ENCODE measurements at regions of chr9 and their contacts with region 1.

Region 1: GRCh38 chr9:19102631-19103345 is at the start of gene HAUS6:
- DNase-seq: peak; percentile 97 to 98 (median 98)
- ATAC-seq: peak; percentile 100
- H3K4me3 ChIP-seq: peak within 1 kb of the TSS; percentile 56 to 92 (median 77)
- H3K27ac ChIP-seq: peak within 1 kb of the TSS; percentile 61 to 92 (median 88)
- H3K4me1 ChIP-seq: peaks cover 0 to 24% (median 11%) of the 10 kb centered on the region in 12 donors
- H3K27me3 ChIP-seq: no peaks in the 10 kb centered on the region
- CTCF ChIP-seq: peak; percentile 34 to 65 (median 47)
- POLR2A ChIP-seq: peak in 1 of 2 donors; percentile 64
- total RNA-seq, gene HAUS6: 4.6 to 8.8 (median 7.3) TPM

Region 2: DNA sequence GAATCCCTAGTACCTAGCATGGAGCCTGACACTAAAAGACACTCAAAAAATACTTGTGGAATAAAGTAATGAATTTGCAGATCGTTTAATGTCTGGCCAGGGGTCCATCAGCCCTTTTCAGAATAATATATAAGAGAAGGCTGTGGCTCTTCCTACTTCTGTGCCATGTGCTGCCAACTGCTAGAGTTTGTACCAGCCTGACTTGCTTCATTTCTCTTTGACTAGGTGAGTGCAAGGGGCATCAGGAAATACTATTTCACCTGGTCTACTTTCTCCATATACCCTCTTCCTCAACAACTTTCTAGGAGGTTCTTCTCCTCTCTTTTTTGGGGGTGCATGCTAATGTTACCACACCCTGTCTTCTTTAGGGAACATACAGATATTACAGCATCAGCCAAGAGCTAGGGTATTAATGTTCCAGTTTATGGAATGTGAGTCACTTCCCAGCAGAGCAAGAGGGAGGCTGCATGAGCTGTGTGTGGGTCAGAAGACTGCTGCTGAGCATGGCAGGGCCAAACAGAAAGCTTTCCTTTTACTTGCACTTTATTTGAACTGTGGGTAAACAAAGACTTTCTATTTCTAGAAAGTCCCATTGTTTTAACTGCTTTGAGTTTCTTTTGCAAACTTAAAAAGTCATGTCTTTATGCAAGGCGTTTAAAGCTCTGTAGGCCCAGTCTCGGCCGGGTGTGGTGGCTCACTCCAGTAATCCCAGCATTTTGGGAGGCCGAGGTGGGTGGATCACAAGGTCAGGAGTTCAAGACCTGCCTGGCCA is 470.0 kb before region 1 on chr9:
- intact Hi-C with region 1: no loop called
- DNase-seq: peak in 4 of 5 donors; percentile 23 to 46 (median 36)
- ATAC-seq: peak; percentile 58 to 97 (median 88)
- H3K4me3 ChIP-seq: no peak overlapping the region
- H3K27ac ChIP-seq: peak overlapping the region; percentile 34 to 76 (median 62)
- H3K4me1 ChIP-seq: peaks cover 0 to 24% (median 9%) of the 10 kb centered on the region in 12 donors
- H3K27me3 ChIP-seq: no peaks in the 10 kb centered on the region
- CTCF ChIP-seq: no peak
- POLR2A ChIP-seq: no peak

Region 3: GRCh38 chr9:19057033-19057432 is 45.8 kb before region 1 on chr9:
- intact Hi-C with region 1: loop called in 1 of 10 experiments (anchors 5 kb)
- DNase-seq: no peak
- ATAC-seq: no peak
- H3K4me3 ChIP-seq: no peak overlapping the region
- H3K27ac ChIP-seq: no peak overlapping the region
- H3K4me1 ChIP-seq: peaks cover 0 to 18% (median 7%) of the 10 kb centered on the region in 12 donors
- H3K27me3 ChIP-seq: no peaks in the 10 kb centered on the region
- CTCF ChIP-seq: no peak
- POLR2A ChIP-seq: no peak

Region 4: DNA sequence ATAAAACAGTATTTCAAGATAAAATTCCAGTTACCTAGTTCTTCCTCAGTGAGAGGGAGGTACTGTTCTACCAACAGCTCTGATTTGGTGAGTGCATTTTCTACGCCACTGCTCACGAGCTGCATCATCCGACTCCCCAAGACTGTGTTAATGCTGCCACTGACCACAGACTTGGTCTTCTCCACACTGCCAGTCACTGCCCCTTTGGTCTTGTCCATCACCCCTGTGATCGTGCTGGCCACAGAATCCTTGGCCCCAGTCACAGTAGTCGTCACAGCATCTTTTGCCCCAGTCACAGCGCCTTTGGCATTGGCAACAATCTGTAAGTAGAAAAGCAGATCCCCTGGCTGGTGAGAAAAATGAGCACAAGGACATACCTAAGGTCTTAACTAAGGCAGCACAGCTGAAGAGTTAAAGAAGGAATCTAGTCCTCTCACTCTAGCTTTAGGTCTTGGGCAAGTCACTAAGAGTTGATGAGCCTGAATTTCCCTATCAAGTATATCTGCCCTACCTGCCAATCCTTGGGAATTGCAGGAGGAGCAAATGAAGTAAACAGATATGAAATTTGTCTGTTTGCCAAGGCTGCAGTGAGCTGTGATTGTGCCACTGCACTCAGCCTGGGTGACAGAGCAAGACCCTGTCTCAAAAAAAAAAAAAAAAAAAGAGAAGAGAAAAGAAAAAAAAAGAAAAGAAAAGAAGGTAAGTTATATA is 18.2 kb after region 1 on chr9:
- intact Hi-C with region 1: loop called in 1 of 10 experiments (anchors 2 kb)
- DNase-seq: no peak
- ATAC-seq: no peak
- H3K4me3 ChIP-seq: no peak overlapping the region
- H3K27ac ChIP-seq: peak overlapping the region in 1 of 12 donors; percentile 17
- H3K4me1 ChIP-seq: peaks cover 0 to 77% (median 20%) of the 10 kb centered on the region in 12 donors
- H3K27me3 ChIP-seq: no peaks in the 10 kb centered on the region
- CTCF ChIP-seq: no peak
- POLR2A ChIP-seq: no peak

Region 5: DNA sequence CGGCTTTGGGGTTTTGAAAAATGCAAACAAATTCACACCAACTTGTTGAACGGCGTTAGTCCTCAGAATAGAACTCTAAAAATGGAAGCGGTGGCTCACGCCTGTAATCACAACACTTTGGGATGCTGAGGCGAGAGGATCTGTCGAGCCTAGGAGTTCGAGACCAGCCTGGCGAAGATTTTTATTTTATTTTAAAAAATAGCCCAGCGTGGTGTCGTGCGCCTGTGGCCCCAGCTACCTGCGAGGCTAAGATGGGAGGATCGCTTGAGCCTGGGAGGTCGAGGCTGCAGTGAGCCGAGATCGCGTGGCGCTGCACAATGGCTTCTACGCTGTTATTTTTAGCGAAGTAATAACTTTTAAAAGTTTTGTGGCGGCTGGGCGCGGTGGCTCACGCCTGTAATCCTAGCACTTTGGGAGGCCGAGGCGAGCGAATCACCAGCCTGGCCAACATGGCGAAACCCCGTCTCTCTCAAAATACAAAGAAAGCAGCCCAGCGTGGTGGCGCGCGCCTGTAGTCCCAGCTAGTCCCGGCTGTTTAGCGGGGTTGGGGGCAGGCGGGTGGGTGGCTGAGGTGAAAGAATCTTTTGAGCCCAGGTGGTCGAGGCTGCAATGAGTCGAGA is 25.2 kb after region 1 on chr9:
- intact Hi-C with region 1: loop called in 2 of 10 experiments (anchors 1 to 2 kb)
- DNase-seq: peak; percentile 16 to 72 (median 46)
- ATAC-seq: peak; percentile 20 to 43 (median 42)
- H3K4me3 ChIP-seq: peak overlapping the region; percentile 58 to 95 (median 82)
- H3K27ac ChIP-seq: peak overlapping the region; percentile 89 to 100 (median 97)
- H3K4me1 ChIP-seq: peaks cover 4 to 62% (median 26%) of the 10 kb centered on the region in 12 donors
- H3K27me3 ChIP-seq: no peaks in the 10 kb centered on the region
- CTCF ChIP-seq: no peak
- POLR2A ChIP-seq: no peak

Region 6: GRCh38 chr9:19161257-19162025 is 58.7 kb after region 1 on chr9:
- intact Hi-C with region 1: no loop called
- DNase-seq: peak in 1 of 5 donors; percentile 43
- ATAC-seq: peak; percentile 58 to 87 (median 81)
- H3K4me3 ChIP-seq: peak overlapping the region in 2 of 12 donors; percentile 3 to 21
- H3K27ac ChIP-seq: peak overlapping the region in 7 of 12 donors; percentile 31 to 94 (median 48)
- H3K4me1 ChIP-seq: peaks cover 3 to 36% (median 11%) of the 10 kb centered on the region in 12 donors
- H3K27me3 ChIP-seq: no peaks in the 10 kb centered on the region
- CTCF ChIP-seq: no peak
- POLR2A ChIP-seq: no peak